ENCODE measurements at regions of chr12 and their contacts with region 1.

Region 1: DNA sequence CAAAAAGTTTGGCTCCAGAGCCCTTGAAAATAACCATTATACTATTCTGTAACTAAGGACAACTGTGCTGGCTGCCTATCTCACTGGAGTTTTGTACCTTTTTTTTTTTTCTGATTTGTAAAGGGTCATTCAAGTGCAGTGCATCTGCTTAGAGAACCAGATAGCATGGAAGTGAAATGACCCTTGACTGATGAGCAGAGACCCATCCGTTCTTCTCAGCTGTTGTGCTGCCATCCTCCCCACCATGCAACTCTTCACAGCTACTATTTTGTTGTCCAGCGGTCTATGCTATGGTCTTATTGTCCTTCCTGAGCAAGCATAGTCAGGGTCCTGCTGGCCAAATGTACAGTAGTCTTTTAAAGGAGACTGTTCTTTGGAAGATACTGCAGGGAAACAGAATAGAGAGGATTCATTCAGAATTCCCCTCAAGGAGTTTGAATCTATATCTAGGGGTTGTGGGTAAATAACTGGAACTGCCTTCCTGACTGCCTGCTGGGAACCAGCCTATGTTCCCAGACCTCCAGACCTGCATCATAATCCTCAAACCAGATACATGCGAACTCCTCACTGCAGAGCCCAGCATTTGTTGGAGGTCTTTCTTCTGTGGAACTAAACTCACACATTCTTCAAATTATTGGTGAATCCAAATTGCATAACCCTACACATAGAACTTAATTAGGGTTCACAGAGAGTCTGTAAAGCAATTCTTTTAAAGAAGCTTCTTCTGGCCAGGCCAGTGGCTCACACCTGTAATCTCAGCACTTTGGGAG is 41.1 kb downstream of the GPR19 start:
- DNase-seq: no peak
- ATAC-seq: no peak
- H3K4me3 Mint-ChIP-seq: no peak overlapping the region
- H3K27ac Mint-ChIP-seq: no peak overlapping the region
- H3K4me1 Mint-ChIP-seq: peaks cover 7% of the 10 kb centered on the region
- H3K27me3 Mint-ChIP-seq: no peaks in the 10 kb centered on the region

Region 2: GRCh38 chr12:12546314-12546772 is 108.5 kb before region 1 on chr12:
- CTCF ChIA-PET with region 1: no interaction called
- POLR2A ChIA-PET with region 1: no interaction called
- intact Hi-C with region 1: no loop called
- DNase-seq: no peak
- ATAC-seq: no peak
- H3K4me3 Mint-ChIP-seq: no peak overlapping the region
- H3K27ac Mint-ChIP-seq: no peak overlapping the region
- H3K4me1 Mint-ChIP-seq: peaks cover 32% of the 10 kb centered on the region
- H3K27me3 Mint-ChIP-seq: no peaks in the 10 kb centered on the region

Region 3: GRCh38 chr12:12736759-12737676 is 82.1 kb after region 1 on chr12:
- CTCF ChIA-PET with region 1: interaction called, 18 read pairs
- POLR2A ChIA-PET with region 1: no interaction called
- intact Hi-C with region 1: no loop called
- DNase-seq: peak; percentile 65
- ATAC-seq: peak; percentile 87
- H3K4me3 Mint-ChIP-seq: peak overlapping the region; percentile 32
- H3K27ac Mint-ChIP-seq: peak overlapping the region; percentile 75
- H3K4me1 Mint-ChIP-seq: peaks cover 35% of the 10 kb centered on the region
- H3K27me3 Mint-ChIP-seq: no peaks in the 10 kb centered on the region